Heart left ventricle (tissue), 16 donors: ENCODE measurements at regions of chr4 and their contacts with region 1.

Region 1: DNA sequence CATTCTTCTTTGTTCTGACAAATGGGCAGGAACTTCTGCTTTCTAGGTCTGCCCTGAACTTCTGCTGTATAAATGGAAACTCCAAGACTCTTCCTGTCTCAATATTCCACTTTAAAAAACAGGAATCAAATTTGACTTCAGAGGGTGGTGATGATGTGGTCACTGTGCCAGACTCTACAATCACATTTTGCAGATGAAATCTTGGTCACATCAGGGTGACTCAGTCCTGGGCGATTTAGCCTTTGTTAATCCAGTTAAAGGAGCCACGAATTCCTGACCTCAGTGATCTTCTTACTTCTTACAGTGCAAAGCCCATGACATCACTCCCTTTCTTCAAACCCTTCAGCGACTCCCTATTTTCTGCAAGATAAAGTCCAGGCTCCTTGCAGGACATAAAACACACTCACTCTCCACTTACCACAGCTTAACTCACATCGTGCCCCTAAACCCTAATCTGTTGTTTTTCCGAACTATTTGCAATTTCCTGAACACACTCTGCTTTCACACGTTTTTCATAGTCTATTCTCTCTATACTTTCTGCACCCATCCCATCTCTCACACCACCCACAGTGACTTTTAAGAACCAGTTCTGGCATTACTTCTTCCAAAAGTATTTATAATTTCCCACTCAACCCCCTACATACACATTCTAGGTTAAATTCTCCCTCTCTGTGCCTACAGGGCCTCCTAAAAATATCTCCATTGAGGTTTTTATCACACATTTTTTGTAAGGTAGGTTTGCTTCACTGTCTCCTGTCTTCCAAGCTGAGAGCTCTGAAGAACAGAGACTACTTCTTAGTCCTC is 11.1 kb downstream of the GASK1B start:
- DNase-seq: peak in 4 of 5 donors; percentile 33 to 61 (median 47)
- ATAC-seq: peak; percentile 12 to 86 (median 78)
- H3K4me3 ChIP-seq: peak overlapping the region in 6 of 12 donors; percentile 3 to 25 (median 8)
- H3K27ac ChIP-seq: peak overlapping the region; percentile 35 to 92 (median 64)
- H3K4me1 ChIP-seq: peaks cover 15 to 100% (median 89%) of the 10 kb centered on the region in 12 donors
- H3K27me3 ChIP-seq: no peaks in the 10 kb centered on the region
- CTCF ChIP-seq: no peak
- POLR2A ChIP-seq: no peak

Region 2: DNA sequence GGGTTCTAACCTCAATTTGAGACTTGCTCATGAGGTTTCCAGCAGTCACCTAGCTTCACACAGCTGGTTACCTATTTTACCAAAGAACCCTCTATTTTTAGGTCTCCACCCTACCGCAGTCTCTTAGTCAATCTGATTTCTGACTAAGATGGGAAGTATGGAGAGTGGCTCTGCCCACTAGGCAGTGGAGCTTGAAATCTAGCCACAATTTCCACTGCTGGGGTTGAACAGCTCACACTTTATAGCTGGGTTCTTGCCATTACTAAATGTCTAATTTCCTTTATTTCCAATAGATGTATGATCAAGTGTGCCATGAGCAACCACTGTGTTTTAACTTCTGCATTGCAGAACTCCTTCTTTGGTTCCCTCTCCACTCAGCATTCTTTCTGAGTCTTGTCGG is 32.1 kb before region 1 on chr4:
- intact Hi-C with region 1: loop called in 4 of 10 experiments (anchors 5 kb)
- DNase-seq: no peak
- ATAC-seq: peak in 1 of 4 donors; percentile 36
- H3K4me3 ChIP-seq: no peak overlapping the region
- H3K27ac ChIP-seq: no peak overlapping the region
- H3K4me1 ChIP-seq: peaks cover 0 to 38% (median 16%) of the 10 kb centered on the region in 12 donors
- H3K27me3 ChIP-seq: no peaks in the 10 kb centered on the region
- CTCF ChIP-seq: no peak
- POLR2A ChIP-seq: no peak